Activated CD4-positive, alpha-beta T cell treated with anti-CD3 and anti-CD28 coated beads, Interleukin-2, amount 10 ng/mL, durations not matched to agents 24 days and 14 days (primary cell): ENCODE measurements at regions of chr6 and their contacts with region 1.

Region 1: GRCh38 chr6:30678964-30679726 is 6.3 kb upstream of the DHX16 start:
- DNase-seq: peak; percentile 97
- H3K4me3 Mint-ChIP-seq: peak overlapping the region; percentile 94
- H3K27ac Mint-ChIP-seq: peak overlapping the region; percentile 97
- H3K4me1 Mint-ChIP-seq: peaks cover 40% of the 10 kb centered on the region
- H3K27me3 Mint-ChIP-seq: no peaks in the 10 kb centered on the region

Region 2: GRCh38 chr6:30717042-30717844 is 38.1 kb after region 1 on chr6 and contains the start of gene MDC1:
- intact Hi-C with region 1: loop called (anchors 1 kb)
- DNase-seq: peak; percentile 99
- H3K4me3 Mint-ChIP-seq: peak within 1 kb of the TSS; percentile 95
- H3K27ac Mint-ChIP-seq: peak within 1 kb of the TSS; percentile 99
- H3K4me1 Mint-ChIP-seq: peaks cover 45% of the 10 kb centered on the region
- H3K27me3 Mint-ChIP-seq: no peaks in the 10 kb centered on the region
- total RNA-seq, gene MDC1: 93.9 and 97.2 TPM in 2 replicates

Region 3: DNA sequence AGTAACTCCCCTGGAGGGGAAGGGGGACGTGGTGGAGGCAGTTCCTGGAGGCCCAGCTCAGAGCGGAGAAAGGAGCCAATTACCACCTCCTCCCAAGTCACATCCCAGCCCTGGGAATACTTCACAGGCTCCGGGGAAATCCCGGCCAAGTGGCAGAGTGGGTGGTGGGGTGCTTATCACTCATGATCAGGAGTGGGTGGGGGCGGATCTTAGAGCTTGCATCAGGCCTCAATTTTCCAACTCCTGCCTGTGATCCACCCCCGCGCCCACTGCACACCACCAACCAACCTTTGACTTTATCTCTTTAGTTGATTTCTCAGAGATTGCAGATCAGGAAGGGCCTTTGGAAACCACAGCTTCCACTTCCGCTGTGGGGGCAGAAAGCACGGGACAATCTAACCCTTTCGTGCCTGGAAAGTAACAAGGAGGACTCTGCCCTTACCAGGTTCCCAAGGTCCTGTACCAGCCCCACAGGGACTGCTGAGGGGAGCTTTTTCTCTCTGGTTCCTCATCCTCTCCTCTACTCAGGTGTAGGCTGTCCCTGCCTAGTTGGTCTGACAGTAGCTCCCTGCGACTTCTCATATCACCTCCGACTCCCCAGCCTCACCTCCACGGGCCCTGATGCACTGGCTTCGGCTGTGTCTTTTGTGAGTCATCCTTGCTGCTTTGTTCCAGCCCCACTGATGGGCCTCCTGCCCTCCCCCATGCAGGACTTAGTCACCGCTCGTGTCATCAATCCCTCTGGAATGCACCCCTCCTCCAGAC is 90.1 kb after region 1 on chr6:
- intact Hi-C with region 1: loop called (anchors 1 kb)
- DNase-seq: peak; percentile 91
- H3K4me3 Mint-ChIP-seq: peak overlapping the region; percentile 76
- H3K27ac Mint-ChIP-seq: peak overlapping the region; percentile 97
- H3K4me1 Mint-ChIP-seq: peaks cover 75% of the 10 kb centered on the region
- H3K27me3 Mint-ChIP-seq: peaks cover 2% of the 10 kb centered on the region

Region 4: DNA sequence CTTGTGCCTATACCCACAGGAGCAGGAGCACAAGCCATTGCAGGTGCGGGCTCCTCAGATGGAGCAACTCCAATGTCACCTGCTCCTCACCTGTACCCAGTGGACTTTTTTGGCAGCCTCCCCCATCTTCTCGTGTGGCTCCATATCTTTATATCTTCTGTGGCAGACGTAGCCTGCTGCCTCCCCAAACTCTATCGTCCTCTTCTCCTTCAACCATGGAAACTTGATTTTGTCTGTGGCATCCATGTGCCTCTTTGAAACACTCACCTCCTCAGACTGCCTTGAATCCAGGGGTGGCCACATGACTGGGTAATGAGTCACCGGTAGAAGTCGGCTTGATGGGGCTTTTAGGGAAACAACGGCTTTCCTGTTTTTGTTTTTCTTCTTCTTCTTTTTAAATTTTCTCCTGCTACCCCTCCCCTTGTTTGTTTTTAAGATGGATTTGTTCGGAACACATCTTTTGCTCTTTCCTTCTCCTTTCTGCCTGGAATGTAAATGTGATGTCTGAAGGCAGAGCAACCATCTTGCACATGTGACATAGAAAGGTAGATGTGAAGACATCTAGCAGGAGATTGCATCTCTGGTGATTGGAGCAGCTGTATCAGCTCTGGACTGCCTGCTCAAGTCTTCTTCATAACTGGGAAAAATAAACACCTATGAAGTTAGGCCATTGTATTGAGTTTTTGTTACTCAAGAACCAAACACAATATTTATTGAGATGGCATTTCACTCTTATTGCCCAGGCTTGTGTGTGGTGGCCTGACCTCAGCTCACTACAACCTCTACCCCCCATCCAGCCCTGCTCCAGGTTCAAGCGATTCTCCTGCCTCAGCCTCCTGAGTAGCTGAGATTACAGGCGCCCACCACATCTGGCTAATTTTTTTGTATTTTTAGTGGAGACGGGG is 135.2 kb after region 1 on chr6:
- intact Hi-C with region 1: loop called (anchors 2 kb)
- DNase-seq: peak; percentile 85
- H3K4me3 Mint-ChIP-seq: peak overlapping the region; percentile 67
- H3K27ac Mint-ChIP-seq: peak overlapping the region; percentile 98
- H3K4me1 Mint-ChIP-seq: peaks cover 75% of the 10 kb centered on the region
- H3K27me3 Mint-ChIP-seq: peaks cover 2% of the 10 kb centered on the region

Region 5: DNA sequence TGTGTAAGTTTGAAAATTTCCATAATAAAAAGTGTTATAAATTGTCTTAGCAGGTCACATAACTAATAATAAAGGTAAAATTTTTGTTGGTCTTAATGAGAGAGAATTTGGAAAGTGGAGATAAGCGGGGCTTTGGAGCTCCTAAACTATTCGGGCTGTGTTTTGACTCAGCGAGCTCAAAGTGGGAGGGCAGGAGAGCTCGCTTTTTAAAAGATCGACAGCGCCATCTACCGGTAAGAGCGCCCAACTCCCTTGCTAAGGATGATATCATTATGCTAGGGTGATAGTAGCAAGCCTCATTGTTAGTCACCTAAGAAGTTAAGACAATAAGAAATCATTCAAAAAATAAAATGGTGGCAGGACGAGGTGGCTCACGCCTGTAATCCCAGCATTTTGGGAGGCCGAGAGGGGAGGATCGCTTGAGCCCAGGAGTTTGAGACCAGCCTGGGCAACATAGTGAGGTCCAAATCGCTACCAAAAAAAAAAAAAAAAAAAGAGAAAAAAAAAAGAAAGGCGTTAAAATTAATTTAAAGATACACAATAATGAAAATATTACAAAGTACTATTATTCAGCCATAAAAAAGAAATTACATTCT is 408.4 kb after region 1 on chr6:
- intact Hi-C with region 1: loop called (anchors 5 kb)
- DNase-seq: peak; percentile 96
- H3K4me3 Mint-ChIP-seq: no peak overlapping the region
- H3K27ac Mint-ChIP-seq: no peak overlapping the region
- H3K4me1 Mint-ChIP-seq: peaks cover 11% of the 10 kb centered on the region
- H3K27me3 Mint-ChIP-seq: peaks cover 16% of the 10 kb centered on the region